CD8-positive, alpha-beta T cell (primary cell): ENCODE measurements at regions of chr3 and their contacts with region 1.

Region 1: GRCh38 chr3:179322286-179323196 is at the start of gene ZNF639:
- DNase-seq: peak; percentile 70 to 96 (median 88)
- ATAC-seq: peak; percentile 87
- H3K4me3 ChIP-seq: peak within 1 kb of the TSS; percentile 84 to 86
- H3K4me3 Mint-ChIP-seq: peak within 1 kb of the TSS; percentile 84
- H3K27ac ChIP-seq: peak within 1 kb of the TSS; percentile 83 to 91
- H3K27ac Mint-ChIP-seq: peak within 1 kb of the TSS; percentile 96
- H3K4me1 ChIP-seq: peaks cover 24% of the 10 kb centered on the region
- H3K4me1 Mint-ChIP-seq: peaks cover 33% of the 10 kb centered on the region
- H3K27me3 ChIP-seq: no peaks in the 10 kb centered on the region
- H3K27me3 Mint-ChIP-seq: no peaks in the 10 kb centered on the region
- CTCF ChIP-seq: peak; percentile 87
- total RNA-seq, gene ZNF639: 103 to 112 TPM

Region 2: DNA sequence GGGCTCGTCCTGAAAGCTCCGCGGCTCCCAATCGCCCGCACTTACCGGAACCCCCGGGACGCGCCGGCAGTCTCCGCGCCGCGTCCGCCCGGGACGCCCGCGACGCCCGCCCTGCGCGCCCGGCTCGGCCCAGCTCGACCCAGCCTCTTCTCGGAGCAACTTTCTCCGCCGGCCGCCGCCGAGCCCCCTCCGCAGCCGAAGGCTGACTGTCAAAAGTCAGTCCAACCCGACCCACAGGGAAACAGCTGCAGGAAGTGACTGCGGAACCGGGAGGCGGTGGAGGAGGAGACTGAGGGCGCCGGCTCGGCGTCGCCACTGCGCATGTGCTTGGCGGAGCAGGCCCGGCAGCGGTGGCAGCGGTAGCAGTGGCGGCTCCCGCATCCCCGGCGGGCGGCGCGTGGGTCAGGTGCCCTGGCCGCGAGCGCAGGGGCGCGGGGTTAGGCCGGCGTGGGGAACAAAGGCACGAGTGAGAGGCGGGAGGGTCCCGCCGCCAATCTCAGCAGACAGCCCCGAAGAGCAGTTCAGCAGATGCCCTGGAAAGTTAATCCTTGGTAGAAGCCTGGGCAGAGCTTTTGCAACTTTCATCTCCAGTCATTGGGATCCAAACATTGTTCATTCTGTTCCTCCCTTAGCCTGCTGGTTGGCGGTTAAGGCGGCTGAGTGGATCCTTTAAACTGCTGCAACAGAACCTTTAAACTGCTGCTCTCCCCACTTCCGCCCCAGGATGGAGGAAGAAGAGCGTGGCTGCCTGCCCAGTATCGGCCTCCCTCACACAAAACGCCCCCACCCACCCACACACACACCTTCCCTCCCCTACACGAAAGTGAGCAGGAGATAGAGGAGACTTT is 250.8 kb before region 1 on chr3 and contains the start of gene ZMAT3:
- CTCF ChIA-PET with region 1: interaction called, 4 read pairs
- POLR2A ChIA-PET with region 1: interaction called, 6 read pairs
- intact Hi-C with region 1: loop called (anchors 2 kb)
- DNase-seq: peak; percentile 65 to 92 (median 85)
- ATAC-seq: peak; percentile 81
- H3K4me3 ChIP-seq: peak within 1 kb of the TSS; percentile 76 to 88
- H3K4me3 Mint-ChIP-seq: peak within 1 kb of the TSS; percentile 98
- H3K27ac ChIP-seq: peak within 1 kb of the TSS; percentile 80 to 83
- H3K27ac Mint-ChIP-seq: peak within 1 kb of the TSS; percentile 93
- H3K4me1 ChIP-seq: peaks cover 17% of the 10 kb centered on the region
- H3K4me1 Mint-ChIP-seq: peaks cover 61% of the 10 kb centered on the region
- H3K27me3 ChIP-seq: no peaks in the 10 kb centered on the region
- H3K27me3 Mint-ChIP-seq: no peaks in the 10 kb centered on the region
- CTCF ChIP-seq: no peak
- total RNA-seq, gene ZMAT3: 8.7 to 9.4 TPM

Region 3: GRCh38 chr3:179196098-179196497 is 126.4 kb before region 1 on chr3:
- CTCF ChIA-PET with region 1: no interaction called
- POLR2A ChIA-PET with region 1: no interaction called
- intact Hi-C with region 1: loop called in 1 of 2 experiments (anchors 5 kb)
- DNase-seq: peak in 3 of 9 experiments; percentile 23 to 66 (median 52)
- ATAC-seq: peak; percentile 66
- H3K4me3 ChIP-seq: no peak overlapping the region
- H3K4me3 Mint-ChIP-seq: no peak overlapping the region
- H3K27ac ChIP-seq: no peak overlapping the region
- H3K27ac Mint-ChIP-seq: no peak overlapping the region
- H3K4me1 ChIP-seq: peaks cover 16% of the 10 kb centered on the region
- H3K4me1 Mint-ChIP-seq: peaks cover 51% of the 10 kb centered on the region
- H3K27me3 ChIP-seq: no peaks in the 10 kb centered on the region
- H3K27me3 Mint-ChIP-seq: no peaks in the 10 kb centered on the region
- CTCF ChIP-seq: no peak

Region 4: GRCh38 chr3:179347345-179348194 is 25.0 kb after region 1 on chr3 and contains the start of gene MFN1:
- CTCF ChIA-PET with region 1: interaction called, 5 read pairs
- POLR2A ChIA-PET with region 1: interaction called, 16 read pairs
- intact Hi-C with region 1: loop called (anchors 1 kb)
- DNase-seq: peak; percentile 72 to 95 (median 88)
- ATAC-seq: peak; percentile 97
- H3K4me3 ChIP-seq: peak within 1 kb of the TSS; percentile 89 to 94
- H3K4me3 Mint-ChIP-seq: peak within 1 kb of the TSS; percentile 100
- H3K27ac ChIP-seq: peak within 1 kb of the TSS; percentile 68 to 77
- H3K27ac Mint-ChIP-seq: peak within 1 kb of the TSS; percentile 99
- H3K4me1 ChIP-seq: peaks cover 6% of the 10 kb centered on the region
- H3K4me1 Mint-ChIP-seq: peaks cover 35% of the 10 kb centered on the region
- H3K27me3 ChIP-seq: no peaks in the 10 kb centered on the region
- H3K27me3 Mint-ChIP-seq: no peaks in the 10 kb centered on the region
- CTCF ChIP-seq: no peak
- total RNA-seq, gene MFN1: 21.9 to 26.7 TPM

Region 5: GRCh38 chr3:179653096-179653797 is 330.7 kb after region 1 on chr3:
- CTCF ChIA-PET with region 1: interaction called, 3 read pairs
- POLR2A ChIA-PET with region 1: no interaction called
- intact Hi-C with region 1: loop called in 1 of 2 experiments (anchors 2 kb)
- DNase-seq: peak; percentile 15 to 79 (median 64)
- ATAC-seq: peak; percentile 62
- H3K4me3 ChIP-seq: peak overlapping the region; percentile 78 to 93
- H3K4me3 Mint-ChIP-seq: peak overlapping the region; percentile 92
- H3K27ac ChIP-seq: peak overlapping the region; percentile 67 to 69
- H3K27ac Mint-ChIP-seq: peak overlapping the region; percentile 90
- H3K4me1 ChIP-seq: peaks cover 6% of the 10 kb centered on the region
- H3K4me1 Mint-ChIP-seq: peaks cover 31% of the 10 kb centered on the region
- H3K27me3 ChIP-seq: no peaks in the 10 kb centered on the region
- H3K27me3 Mint-ChIP-seq: no peaks in the 10 kb centered on the region
- CTCF ChIP-seq: no peak